Common myeloid progenitor, CD34-positive (primary cell): ENCODE measurements at regions of chr2 and their contacts with region 1.

Region 1: DNA sequence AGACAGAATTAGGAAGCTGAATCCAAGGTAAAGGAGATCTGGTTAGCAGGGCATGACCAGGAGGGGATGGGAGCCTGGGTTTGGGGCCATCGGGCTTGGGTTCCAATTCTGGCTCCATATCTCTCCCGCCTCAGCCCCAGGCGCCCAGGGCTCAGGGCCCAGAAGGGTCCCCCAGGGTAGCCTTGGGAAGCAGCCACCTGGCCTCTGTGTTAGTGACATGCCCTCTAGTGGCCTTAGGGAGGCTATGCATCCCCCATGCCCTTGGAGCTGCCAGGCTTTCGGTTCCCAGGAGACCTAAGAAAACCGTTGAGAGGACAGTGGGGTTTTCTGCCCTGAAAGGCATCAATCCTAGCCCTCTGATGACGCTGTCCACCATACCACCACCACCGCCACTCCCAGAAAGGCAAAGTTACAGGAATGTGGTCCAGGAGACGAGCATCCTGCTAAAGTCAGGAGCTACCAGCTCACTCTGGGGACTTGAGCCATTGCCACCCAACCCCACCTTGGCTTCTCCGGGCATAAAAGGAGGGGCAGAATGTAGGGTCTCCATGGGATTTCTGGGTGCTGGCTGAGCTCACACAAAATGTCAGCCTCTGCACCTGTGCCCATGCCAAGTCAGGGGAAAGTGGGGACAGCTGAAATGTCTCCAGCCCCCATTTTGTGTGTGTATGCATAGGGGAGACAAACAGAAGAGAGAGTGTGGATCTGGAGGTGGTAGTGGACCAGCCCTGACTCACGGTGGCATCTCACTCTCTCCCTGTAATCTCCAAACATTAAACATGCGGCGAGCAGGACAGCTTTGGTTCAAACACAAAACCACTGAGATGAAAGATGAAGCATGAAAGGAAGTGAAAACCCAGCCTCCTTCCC is 56.5 kb downstream of the EMX1 start:
- DNase-seq: peak; percentile 34 to 69 (median 56)
- H3K4me3 ChIP-seq: no peak overlapping the region
- H3K27ac ChIP-seq: no peak overlapping the region
- H3K4me1 ChIP-seq: no peaks in the 10 kb centered on the region
- H3K27me3 ChIP-seq: peaks cover 0 to 4% (median 0%) of the 10 kb centered on the region in 5 experiments

Region 2: DNA sequence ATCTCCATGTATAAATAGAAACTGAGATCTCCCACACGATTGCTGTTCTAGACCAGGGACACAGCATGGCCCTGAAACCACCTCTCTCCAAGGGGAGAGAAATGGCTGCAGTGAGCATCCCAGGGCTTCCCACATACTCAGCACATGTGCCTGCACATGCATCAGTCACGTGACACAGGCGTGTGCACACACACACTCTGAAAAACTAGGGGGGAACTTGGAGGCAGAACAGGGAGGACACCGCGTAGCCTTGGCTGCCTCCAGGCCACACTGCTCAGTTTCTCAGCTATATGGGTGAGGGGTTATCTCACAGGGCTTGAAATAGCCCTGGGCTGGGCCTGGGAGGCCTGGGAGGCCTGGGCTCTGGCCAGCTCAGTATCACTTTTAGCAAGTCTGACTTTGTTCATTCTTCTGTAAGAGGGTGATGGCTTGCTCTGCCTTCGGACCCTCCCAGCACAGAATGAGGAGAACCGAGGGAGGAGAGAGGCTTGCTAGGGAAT is 10.4 kb after region 1 on chr2:
- CTCF ChIA-PET with region 1: interaction called, 15 read pairs
- POLR2A ChIA-PET with region 1: no interaction called
- DNase-seq: no peak
- H3K4me3 ChIP-seq: no peak overlapping the region
- H3K27ac ChIP-seq: no peak overlapping the region
- H3K4me1 ChIP-seq: peaks cover 0 to 11% (median 3%) of the 10 kb centered on the region in 4 experiments
- H3K27me3 ChIP-seq: no peaks in the 10 kb centered on the region